ENCODE measurements at regions of chr5 and their contacts with region 1.

Region 1: DNA sequence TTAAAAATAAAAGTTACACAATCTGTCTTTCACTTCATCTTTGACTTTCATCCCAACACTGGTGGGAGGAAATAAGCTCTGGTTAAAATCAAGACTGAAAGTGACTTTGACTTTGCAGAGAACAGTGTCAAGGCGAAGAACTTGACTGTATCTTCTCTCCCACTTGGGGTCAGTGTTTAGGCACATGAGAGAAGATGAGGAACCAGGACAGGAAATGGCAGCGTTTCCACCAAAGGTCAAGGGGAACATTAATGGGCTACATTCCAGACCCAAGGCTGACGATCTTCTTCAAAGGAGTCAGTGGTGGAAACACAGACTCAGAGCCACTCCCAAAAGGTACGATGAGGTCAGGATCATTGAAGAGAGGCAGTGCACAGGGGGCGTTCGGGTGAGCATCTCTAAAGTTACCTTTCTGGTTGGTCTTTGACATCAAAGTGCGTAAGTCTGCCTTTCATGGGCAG is 409.6 kb downstream of the ARHGEF28 start:
- DNase-seq: no peak
- ATAC-seq: peak; percentile 81 to 86
- H3K4me3 ChIP-seq: no peak overlapping the region
- H3K27ac ChIP-seq: no peak overlapping the region
- H3K4me1 ChIP-seq: peaks cover 2% of the 10 kb centered on the region
- H3K27me3 ChIP-seq: no peaks in the 10 kb centered on the region

Region 2: DNA sequence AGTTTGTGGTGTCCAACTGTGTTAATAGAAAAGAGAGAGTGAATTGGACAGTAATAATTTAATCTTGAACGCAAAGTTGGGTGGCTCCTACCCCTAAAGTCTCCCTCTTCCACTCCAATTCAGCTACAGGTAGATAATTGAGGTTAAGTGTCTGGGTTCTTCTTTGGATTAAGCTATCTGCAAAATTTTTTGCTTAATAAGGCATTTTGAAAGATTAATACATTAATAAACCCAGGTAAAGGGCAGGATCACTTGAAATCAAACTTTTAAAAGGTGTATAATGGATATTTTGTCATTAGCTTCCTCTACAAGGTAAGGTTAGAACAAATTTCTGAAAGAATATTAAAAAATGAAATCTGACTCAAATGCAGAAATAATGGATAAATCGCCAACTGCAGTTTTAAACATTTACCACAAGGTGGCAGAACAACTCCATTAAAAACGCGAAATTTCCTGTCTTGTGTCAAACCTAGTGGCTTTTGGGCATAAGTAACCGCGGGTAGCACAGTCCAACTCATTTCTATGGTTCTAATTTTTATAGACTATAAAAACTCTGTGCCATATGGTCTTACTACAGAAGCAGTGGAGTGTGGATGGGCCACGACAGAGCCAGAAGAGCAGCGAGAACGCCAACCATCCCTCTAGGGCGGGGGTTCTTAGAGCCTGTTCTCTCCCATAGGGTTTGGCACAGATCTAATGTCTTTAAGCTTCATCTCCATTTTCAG is 133.1 kb before region 1 on chr5:
- intact Hi-C with region 1: loop called in 1 of 4 experiments (anchors 10 kb)
- DNase-seq: no peak
- ATAC-seq: peak; percentile 34 to 51
- H3K4me3 ChIP-seq: no peak overlapping the region
- H3K27ac ChIP-seq: no peak overlapping the region
- H3K4me1 ChIP-seq: no peaks in the 10 kb centered on the region
- H3K27me3 ChIP-seq: no peaks in the 10 kb centered on the region

Region 3: DNA sequence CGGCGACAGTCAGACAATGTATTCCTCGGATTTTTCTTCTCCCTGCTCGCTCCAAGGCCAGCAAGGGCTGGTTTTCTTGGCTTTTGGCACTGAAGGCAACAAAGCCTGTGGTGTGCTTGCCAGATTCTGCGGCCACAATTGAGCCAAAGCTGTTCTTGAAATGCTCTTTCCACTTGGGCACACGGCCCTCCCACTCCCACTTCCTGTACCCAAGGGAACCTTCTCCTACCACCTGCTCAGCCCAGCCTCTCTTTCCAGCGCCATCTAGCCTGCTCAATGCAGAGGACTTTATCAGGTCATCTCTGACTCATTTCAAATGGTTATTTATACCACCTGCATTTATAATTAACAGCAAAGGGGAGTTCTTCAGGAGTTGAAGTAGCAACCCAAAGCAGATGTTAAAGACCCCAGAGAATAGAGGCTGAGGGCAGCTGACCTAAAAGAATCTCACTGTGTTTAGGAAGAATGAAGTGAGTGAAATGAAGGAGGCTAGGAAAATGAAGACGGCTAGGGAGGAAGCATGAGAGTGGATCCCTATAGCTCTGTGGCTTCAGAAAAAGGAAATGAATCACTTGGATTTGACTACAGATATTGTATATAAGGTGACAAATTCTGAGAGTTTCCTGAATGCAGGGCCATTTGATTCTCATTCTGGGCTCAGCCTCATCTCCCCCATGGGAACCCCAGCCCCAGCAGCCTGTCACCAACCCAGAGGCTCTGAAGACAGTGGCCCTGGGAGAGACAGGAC is 166.0 kb after region 1 on chr5:
- intact Hi-C with region 1: loop called in 1 of 4 experiments (anchors 10 kb)
- DNase-seq: peak; percentile 55 to 72 (median 64)
- ATAC-seq: peak; percentile 58 to 74
- H3K4me3 ChIP-seq: no peak overlapping the region
- H3K27ac ChIP-seq: no peak overlapping the region
- H3K4me1 ChIP-seq: peaks cover 6% of the 10 kb centered on the region
- H3K27me3 ChIP-seq: no peaks in the 10 kb centered on the region

Region 4: DNA sequence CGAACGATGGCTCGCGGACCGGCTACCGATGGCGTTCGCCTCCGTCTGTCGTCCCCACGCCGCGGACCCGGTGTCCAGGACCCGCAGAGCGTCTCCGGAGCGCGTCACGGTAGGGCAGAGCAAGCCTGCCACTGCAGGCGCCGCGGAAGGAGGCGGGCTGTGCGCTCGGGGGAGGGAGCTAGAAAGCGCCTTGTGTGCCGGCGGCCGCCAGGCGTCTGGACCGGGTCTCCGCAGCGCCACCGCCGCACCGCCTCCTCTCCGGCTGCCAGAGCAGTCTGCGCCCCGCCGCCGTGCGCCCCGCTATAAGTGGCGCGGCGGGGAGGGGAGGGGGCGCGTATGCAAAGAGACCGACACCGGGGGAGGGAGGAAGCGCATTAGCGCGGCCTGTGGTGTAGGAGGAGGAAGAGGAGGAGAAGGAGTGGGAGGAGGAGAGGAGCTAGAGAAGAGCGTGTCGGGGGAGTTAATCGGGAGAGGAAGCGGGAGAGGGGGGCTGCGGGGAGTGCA is 605.0 kb after region 1 on chr5 and contains the start of gene ENC1:
- intact Hi-C with region 1: loop called in 2 of 4 experiments (anchors 5 kb)
- DNase-seq: peak; percentile 90 to 96 (median 95)
- ATAC-seq: peak; percentile 94
- H3K4me3 ChIP-seq: peak within 1 kb of the TSS; percentile 66
- H3K27ac ChIP-seq: peak within 1 kb of the TSS; percentile 69
- H3K4me1 ChIP-seq: peaks cover 5% of the 10 kb centered on the region
- H3K27me3 ChIP-seq: no peaks in the 10 kb centered on the region
- total RNA-seq, gene ENC1: 5.3 to 14.9 (median 7.0) TPM